ENCODE measurements at regions of chr10 and their contacts with region 1.

Region 1: DNA sequence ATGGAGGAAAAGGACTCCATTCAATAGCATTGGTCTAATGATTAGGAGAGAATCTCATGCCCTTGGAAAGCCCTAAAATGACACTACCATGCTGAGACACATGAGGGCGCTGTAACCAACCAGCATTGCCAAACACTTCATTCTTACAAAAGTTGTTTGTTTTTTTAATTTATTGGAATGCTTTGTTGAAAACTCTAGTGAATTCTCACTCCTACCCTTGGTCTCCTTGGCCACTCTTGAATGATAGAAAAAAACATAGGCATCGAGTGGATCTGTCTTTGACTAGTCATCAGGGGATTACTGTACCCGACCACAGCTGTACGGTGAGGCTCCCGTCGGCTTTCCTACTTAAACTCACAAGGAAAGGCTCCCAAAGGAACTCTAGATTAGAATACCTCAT is 29.3 kb upstream of the ADD3 start:
- DNase-seq: peak; percentile 26
- H3K4me3 ChIP-seq: no peak overlapping the region
- H3K27ac ChIP-seq: no peak overlapping the region
- H3K4me1 ChIP-seq: no peaks in the 10 kb centered on the region
- H3K27me3 ChIP-seq: no peaks in the 10 kb centered on the region
- CTCF ChIP-seq: peak; percentile 88 to 96

Region 2: GRCh38 chr10:109966961-109967738 is 11.3 kb before region 1 on chr10:
- CTCF ChIA-PET with region 1: no interaction called
- dilution Hi-C with region 1: no loop called
- in situ Hi-C with region 1: no loop called
- intact Hi-C with region 1: no loop called
- DNase-seq: no peak
- H3K4me3 ChIP-seq: no peak overlapping the region
- H3K27ac ChIP-seq: no peak overlapping the region
- H3K4me1 ChIP-seq: no peaks in the 10 kb centered on the region
- H3K27me3 ChIP-seq: no peaks in the 10 kb centered on the region
- CTCF ChIP-seq: no peak

Region 3: DNA sequence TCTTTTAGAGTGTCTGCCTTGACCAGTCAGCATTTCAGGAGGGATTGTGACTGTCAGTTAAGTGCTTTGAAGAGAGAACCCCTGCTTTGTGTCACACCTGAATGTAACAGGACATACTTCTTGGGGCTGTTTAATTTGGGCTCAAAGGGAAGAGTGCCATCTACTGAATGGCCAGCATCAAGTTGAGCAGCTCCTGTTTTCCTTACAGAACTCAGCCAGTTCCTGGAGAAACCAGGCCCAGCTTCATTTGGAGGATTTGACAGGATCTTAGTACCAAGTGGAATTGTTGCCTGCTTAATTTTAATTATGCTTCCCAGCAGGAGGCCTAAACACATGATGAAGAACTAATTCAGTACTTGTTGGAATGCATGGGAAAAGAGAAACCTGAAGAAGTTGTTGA is 37.6 kb after region 1 on chr10:
- CTCF ChIA-PET with region 1: interaction called, 5 read pairs
- dilution Hi-C with region 1: no loop called
- in situ Hi-C with region 1: no loop called
- intact Hi-C with region 1: loop called (anchors 2 kb)
- DNase-seq: no peak
- H3K4me3 ChIP-seq: no peak overlapping the region
- H3K27ac ChIP-seq: no peak overlapping the region
- H3K4me1 ChIP-seq: peaks cover 15% of the 10 kb centered on the region
- H3K27me3 ChIP-seq: no peaks in the 10 kb centered on the region
- CTCF ChIP-seq: peak in 1 of 2 donors; percentile 57